ENCODE measurements at regions of chr16 and their contacts with region 1.

Region 1: GRCh38 chr16:74666425-74667254 is at the start of gene RFWD3:
- DNase-seq: peak; percentile 100
- H3K4me3 ChIP-seq: peak within 1 kb of the TSS; percentile 93
- H3K27ac ChIP-seq: peak within 1 kb of the TSS; percentile 75
- H3K4me1 ChIP-seq: peaks cover 37% of the 10 kb centered on the region
- CTCF ChIP-seq: no peak
- total RNA-seq, gene RFWD3: 56.3 and 79.7 TPM in 2 replicates

Region 2: DNA sequence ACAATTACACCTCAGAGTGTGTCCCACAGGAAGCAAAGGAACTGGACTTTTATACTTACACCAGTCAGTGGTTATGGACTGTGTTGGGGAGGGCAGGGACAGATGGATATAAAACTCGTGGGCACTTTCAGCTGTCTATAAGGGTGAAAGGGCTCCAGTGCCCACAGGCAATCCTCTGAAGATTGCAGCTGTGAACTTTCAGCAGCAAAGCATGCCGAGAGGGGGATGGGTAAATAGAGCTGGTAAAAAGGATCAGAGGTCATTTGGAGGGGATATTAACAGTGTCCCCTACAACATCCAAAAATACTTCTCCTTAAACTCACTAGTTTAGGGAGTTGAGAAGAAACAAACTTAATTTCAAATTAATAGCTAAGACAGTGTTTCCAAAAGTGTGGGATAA is 13.3 kb after region 1 on chr16:
- CTCF ChIA-PET with region 1: no interaction called
- POLR2A ChIA-PET with region 1: interaction called, 10 read pairs
- intact Hi-C with region 1: no loop called
- DNase-seq: no peak
- H3K4me3 ChIP-seq: no peak overlapping the region
- H3K27ac ChIP-seq: no peak overlapping the region
- H3K4me1 ChIP-seq: no peaks in the 10 kb centered on the region
- CTCF ChIP-seq: no peak

Region 3: GRCh38 chr16:74695450-74696422 is 29.1 kb after region 1 on chr16:
- CTCF ChIA-PET with region 1: interaction called, 8 read pairs
- POLR2A ChIA-PET with region 1: interaction called, 20 read pairs
- intact Hi-C with region 1: loop called (anchors 2 kb)
- DNase-seq: peak; percentile 92
- H3K4me3 ChIP-seq: peak overlapping the region; percentile 66
- H3K27ac ChIP-seq: peak overlapping the region; percentile 26
- H3K4me1 ChIP-seq: peaks cover 37% of the 10 kb centered on the region
- CTCF ChIP-seq: no peak

Region 4: DNA sequence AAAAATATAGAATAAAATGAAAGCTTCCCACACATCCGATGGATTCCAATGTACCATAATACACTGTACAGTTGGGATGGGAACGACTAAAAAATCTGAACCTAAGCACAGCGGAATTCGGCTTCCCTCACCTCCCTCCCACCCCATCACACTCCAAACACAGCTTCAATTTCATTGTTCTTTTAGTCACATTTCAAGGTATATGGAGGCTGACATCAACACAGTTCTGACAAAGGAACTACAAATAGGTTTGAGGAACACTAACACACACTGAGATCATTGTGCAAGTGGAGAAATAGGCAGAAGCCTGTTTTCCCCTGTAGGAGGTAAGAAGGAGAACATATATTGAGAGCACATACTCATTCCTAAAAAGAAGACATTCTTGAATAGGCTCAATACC is 233.2 kb after region 1 on chr16:
- CTCF ChIA-PET with region 1: no interaction called
- POLR2A ChIA-PET with region 1: interaction called, 11 read pairs
- intact Hi-C with region 1: no loop called
- DNase-seq: no peak
- H3K4me3 ChIP-seq: no peak overlapping the region
- H3K27ac ChIP-seq: no peak overlapping the region
- H3K4me1 ChIP-seq: no peaks in the 10 kb centered on the region
- CTCF ChIP-seq: no peak